ENCODE measurements at regions of chr10 and their contacts with region 1.

Region 1: DNA sequence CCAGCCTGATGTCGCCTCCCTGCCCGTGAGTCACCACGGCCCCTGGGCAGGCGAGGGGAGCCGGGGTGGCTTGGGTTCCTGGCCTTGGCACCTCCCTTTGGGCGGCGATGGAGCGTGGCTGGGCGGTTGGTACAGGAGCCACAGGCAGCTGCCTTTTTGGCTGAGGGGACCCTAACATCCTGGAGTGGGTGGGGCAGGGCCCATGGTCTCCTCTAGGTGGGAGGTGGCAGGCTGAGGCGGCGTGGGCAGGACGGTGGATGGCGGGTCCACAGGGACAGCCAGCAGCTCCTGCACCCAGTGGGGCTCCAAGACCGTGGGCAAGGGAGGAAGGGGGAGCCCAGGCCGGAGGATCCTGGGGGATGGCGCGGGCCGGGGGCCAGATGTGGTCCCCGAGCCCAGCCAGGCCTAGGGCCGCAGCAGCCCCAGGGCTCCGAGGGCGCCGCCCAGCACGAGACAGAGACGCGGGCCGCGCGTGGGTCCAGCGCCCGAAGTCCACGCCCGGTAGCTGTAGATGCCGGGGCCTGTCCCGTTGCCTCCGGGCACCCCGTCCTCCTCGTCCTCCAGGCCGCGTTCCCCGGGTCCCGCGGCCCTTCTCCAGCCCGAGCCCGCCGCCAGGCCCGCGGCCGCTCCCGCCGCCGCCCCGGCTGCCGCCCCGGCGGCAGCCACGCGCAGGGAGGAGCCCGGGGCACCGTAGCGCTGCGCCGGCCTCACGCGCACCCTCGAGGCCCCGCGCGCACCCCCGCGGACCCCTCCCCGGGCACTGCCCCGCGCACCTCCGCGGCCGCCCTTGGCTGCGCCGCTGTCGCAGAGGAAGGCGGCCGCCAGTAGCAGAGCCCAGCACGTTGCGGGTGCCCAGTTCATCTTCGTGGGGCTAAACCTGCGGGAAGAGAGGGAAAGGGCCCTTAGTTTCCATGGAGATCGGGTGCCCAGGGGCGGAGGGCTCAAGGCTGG is 1.3 kb downstream of the SPRN start:
- DNase-seq: peak in 1 of 3 donors; percentile 2
- H3K4me3 ChIP-seq: no peak overlapping the region
- H3K4me3 Mint-ChIP-seq: peak overlapping the region in 1 of 2 donors; percentile 78
- H3K27ac ChIP-seq: no peak overlapping the region
- H3K27ac Mint-ChIP-seq: no peak overlapping the region
- H3K4me1 ChIP-seq: peaks cover 0 to 4% of the 10 kb centered on the region in 2 donors
- H3K4me1 Mint-ChIP-seq: no peaks in the 10 kb centered on the region
- H3K27me3 ChIP-seq: peaks cover 0 to 25% of the 10 kb centered on the region in 2 donors
- H3K27me3 Mint-ChIP-seq: peaks cover 20 to 29% (median 26%) of the 10 kb centered on the region in 3 donors
- CTCF ChIP-seq: no peak

Region 2: GRCh38 chr10:133565441-133566294 is 142.6 kb after region 1 on chr10 and contains the start of gene SYCE1:
- intact Hi-C with region 1: loop called in 1 of 2 experiments (anchors 5 kb)
- DNase-seq: peak in 1 of 3 donors; percentile 39
- H3K4me3 ChIP-seq: no peak within 1 kb of the TSS
- H3K4me3 Mint-ChIP-seq: peak within 1 kb of the TSS in 1 of 2 donors; percentile 41
- H3K27ac ChIP-seq: no peak within 1 kb of the TSS
- H3K27ac Mint-ChIP-seq: no peak within 1 kb of the TSS
- H3K4me1 ChIP-seq: no peaks in the 10 kb centered on the region
- H3K4me1 Mint-ChIP-seq: no peaks in the 10 kb centered on the region
- H3K27me3 ChIP-seq: peaks cover 0 to 8% of the 10 kb centered on the region in 2 donors
- H3K27me3 Mint-ChIP-seq: peaks cover 0 to 23% (median 3%) of the 10 kb centered on the region in 3 donors
- CTCF ChIP-seq: no peak
- polyA plus RNA-seq, gene SYCE1: 0.12 TPM in 1 of 3 donors, not detected in the others

Measured in CD14-positive monocyte (primary cell).